ENCODE measurements at regions of chr9 and their contacts with region 1.

Region 1: GRCh38 chr9:114559830-114560513 is 27.6 kb upstream of the ATP6V1G1 start:
- DNase-seq: no peak
- H3K4me3 ChIP-seq: no peak overlapping the region
- H3K4me3 Mint-ChIP-seq: no peak overlapping the region
- H3K27ac Mint-ChIP-seq: no peak overlapping the region
- H3K4me1 ChIP-seq: peaks cover 21% of the 10 kb centered on the region
- H3K4me1 Mint-ChIP-seq: peaks cover 14% of the 10 kb centered on the region
- H3K27me3 ChIP-seq: no peaks in the 10 kb centered on the region
- H3K27me3 Mint-ChIP-seq: no peaks in the 10 kb centered on the region
- CTCF ChIP-seq: no peak

Region 2: DNA sequence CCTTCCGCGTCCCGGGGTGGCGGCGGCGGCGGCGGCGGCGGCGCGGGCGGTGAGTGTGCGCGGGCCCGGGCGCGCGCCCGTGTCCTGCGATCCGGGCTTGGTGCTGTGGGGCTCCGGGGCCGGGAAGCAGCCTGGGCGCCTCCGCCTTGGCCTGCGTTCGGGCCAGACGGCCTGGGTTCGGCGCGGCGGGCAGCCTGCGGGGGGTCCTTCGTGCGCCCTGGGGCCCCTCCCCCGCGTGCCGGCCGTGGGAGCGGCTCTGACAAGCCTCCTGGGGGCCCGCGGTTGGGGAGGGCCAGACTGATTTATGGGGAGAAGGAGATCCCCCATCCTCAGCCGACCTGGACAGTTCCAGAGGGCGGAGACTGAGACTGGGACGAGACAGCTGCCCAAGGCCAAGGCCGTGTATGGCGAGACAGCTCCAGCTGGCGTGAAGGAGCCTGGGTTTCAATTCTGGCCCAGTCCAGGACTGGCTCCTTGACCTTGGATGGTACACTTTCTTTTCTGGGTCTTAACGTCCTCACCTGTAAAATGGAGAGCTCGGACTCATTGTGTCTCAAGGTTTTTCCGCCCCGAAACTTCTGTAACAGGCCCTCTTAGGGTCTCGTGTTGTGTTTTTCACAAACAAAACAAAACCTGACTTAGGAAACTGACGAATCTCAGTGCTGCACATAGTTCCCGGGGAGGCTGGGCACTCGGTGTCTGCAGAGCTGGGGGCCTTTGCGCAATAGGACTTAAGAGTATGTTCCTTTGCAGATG is 51.7 kb after region 1 on chr9:
- CTCF ChIA-PET with region 1: no interaction called
- POLR2A ChIA-PET with region 1: no interaction called
- intact Hi-C with region 1: loop called (anchors 2 kb)
- DNase-seq: peak; percentile 70 to 71
- H3K4me3 ChIP-seq: peak overlapping the region; percentile 39
- H3K4me3 Mint-ChIP-seq: peak overlapping the region; percentile 75
- H3K27ac Mint-ChIP-seq: peak overlapping the region; percentile 82
- H3K4me1 ChIP-seq: 0 out of 2 replicates have a peak, but pooled peaks cover 10% of the 10 kb centered on the region
- H3K4me1 Mint-ChIP-seq: peaks cover 13% of the 10 kb centered on the region
- H3K27me3 ChIP-seq: no peaks in the 10 kb centered on the region
- H3K27me3 Mint-ChIP-seq: no peaks in the 10 kb centered on the region
- CTCF ChIP-seq: no peak